OCI-LY7 (cell line): ENCODE measurements at regions of chr10 and their contacts with region 1.

Region 1: GRCh38 chr10:96831867-96832720 is at the start of gene LCOR:
- DNase-seq: peak; percentile 94
- H3K4me3 ChIP-seq: peak within 1 kb of the TSS; percentile 95
- H3K27ac ChIP-seq: peak within 1 kb of the TSS; percentile 89
- H3K4me1 ChIP-seq: peaks cover 54% of the 10 kb centered on the region
- CTCF ChIP-seq: no peak
- total RNA-seq, gene LCOR: 17.1 and 32.1 TPM in 2 replicates

Region 2: GRCh38 chr10:96271016-96271829 is 560.9 kb before region 1 on chr10 and contains the start of gene BLNK:
- CTCF ChIA-PET with region 1: no interaction called
- POLR2A ChIA-PET with region 1: no interaction called
- intact Hi-C with region 1: loop called (anchors 5 kb)
- DNase-seq: peak; percentile 89
- H3K4me3 ChIP-seq: peak within 1 kb of the TSS; percentile 90
- H3K27ac ChIP-seq: peak within 1 kb of the TSS; percentile 100
- H3K4me1 ChIP-seq: peaks cover 58% of the 10 kb centered on the region
- CTCF ChIP-seq: no peak
- total RNA-seq, gene BLNK: 78.0 and 113 TPM in 2 replicates

Region 3: GRCh38 chr10:96642973-96643372 is 189.1 kb before region 1 on chr10:
- CTCF ChIA-PET with region 1: no interaction called
- POLR2A ChIA-PET with region 1: no interaction called
- intact Hi-C with region 1: loop called (anchors 2 kb)
- DNase-seq: peak; percentile 87
- H3K4me3 ChIP-seq: no peak overlapping the region
- H3K27ac ChIP-seq: peak overlapping the region; percentile 14
- H3K4me1 ChIP-seq: peaks cover 25% of the 10 kb centered on the region
- CTCF ChIP-seq: peak; percentile 98

Region 4: DNA sequence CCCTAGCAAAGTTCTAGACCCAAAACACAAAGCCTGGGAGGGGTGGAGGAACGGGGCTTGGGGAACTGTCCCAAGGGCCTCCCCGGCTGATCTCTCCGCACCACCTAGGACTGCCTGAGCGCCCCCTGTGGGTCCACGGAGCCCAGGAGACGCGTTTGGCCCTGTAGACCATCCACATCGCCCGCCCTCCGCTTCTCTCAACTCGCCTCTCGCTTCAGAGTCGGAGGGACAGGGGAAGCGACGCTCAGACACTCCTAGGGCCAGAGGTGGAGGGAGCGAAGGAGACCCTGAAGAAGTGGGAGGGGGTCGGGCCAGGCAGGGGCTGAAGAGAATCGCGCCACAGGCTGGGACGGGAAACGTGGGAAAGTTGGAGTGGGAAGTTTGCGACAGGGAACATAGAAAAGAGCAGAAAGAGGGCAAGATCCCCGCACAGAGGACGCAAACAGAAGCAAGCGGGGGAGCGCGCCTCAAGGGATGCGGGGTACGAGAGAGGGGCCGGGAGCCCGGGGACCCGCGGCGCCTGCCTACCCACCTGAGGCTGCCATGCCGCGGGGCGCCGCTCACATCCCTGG is 112.2 kb before region 1 on chr10:
- CTCF ChIA-PET with region 1: no interaction called
- POLR2A ChIA-PET with region 1: interaction called, 3 read pairs
- intact Hi-C with region 1: loop called (anchors 1 kb)
- DNase-seq: peak; percentile 94
- H3K4me3 ChIP-seq: peak overlapping the region; percentile 87
- H3K27ac ChIP-seq: peak overlapping the region; percentile 91
- H3K4me1 ChIP-seq: peaks cover 66% of the 10 kb centered on the region
- CTCF ChIP-seq: peak; percentile 86

Region 5: DNA sequence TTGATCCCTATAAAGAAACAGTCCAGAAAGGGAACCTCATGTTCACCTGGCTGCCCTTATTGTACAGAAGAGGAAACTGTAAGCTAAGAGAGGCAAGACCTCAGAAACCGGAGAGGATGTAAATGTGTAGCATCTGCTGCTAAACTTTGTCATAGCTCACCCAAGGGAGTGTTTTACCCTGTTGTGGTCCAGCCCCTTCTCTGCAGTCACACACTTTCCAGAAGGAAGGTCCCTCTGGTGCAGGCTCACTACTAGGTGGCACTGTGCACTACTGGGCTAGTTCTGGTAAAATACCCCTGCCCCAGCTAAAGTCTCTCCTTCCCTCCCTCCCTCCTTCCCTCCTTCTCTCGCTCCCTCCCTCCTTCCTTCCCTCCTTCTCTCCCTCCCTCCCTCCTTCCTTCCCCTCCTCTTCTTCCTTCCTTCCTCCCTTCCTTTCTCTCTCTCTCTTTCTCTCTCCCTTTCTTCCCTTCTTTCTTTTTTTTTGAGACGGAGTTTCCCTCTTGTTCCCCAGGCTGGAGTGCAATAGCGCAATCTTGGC is 42.5 kb before region 1 on chr10:
- CTCF ChIA-PET with region 1: no interaction called
- POLR2A ChIA-PET with region 1: interaction called, 5 read pairs
- intact Hi-C with region 1: loop called (anchors 5 kb)
- DNase-seq: peak; percentile 87
- H3K4me3 ChIP-seq: no peak overlapping the region
- H3K27ac ChIP-seq: peak overlapping the region; percentile 53
- H3K4me1 ChIP-seq: peaks cover 30% of the 10 kb centered on the region
- CTCF ChIP-seq: peak; percentile 56